ENCODE measurements at regions of chr1 and their contacts with region 1.

Region 1: DNA sequence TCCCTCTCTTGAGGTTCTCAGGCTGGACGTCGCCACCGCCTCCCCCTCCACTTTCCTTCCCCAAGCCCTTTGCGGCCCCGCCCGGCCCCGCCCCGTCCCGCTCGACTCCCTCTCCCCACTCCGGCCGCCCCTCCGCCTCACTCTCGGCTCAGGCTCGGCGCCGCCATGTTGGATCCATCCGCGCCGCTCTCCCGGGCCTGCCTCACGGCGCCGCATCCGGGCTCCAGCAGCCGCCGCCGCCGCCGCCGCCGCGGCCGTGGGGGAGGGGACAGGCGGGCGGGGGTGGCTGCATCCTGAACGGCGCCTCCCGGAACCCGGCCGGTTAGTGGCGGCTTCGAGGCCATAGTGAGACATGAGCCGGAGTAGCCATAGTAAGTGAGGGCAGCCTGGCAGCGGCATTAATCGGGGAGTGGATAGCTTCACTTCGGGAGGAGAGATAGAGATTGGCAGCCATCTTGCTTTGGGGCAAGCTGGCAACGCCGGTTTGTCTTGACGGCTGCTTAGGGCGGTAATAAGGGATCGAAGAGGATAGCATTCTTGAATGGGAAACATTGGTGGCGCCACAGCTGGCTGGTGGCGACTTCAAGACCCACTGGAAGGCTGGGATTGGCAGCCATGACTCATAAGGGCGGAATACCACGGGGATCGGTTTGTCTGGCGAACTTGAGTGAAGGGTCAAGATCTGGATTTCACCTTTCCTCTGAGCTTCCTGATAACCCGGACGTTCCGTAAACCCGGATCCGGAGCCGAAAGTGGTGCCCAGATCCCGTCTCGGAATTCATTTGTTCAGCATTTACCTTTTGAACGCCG is at the start of gene DEDD:
- DNase-seq: peak; percentile 97
- ATAC-seq: peak; percentile 94
- total RNA-seq, gene DEDD: 29.2 TPM

Region 2: DNA sequence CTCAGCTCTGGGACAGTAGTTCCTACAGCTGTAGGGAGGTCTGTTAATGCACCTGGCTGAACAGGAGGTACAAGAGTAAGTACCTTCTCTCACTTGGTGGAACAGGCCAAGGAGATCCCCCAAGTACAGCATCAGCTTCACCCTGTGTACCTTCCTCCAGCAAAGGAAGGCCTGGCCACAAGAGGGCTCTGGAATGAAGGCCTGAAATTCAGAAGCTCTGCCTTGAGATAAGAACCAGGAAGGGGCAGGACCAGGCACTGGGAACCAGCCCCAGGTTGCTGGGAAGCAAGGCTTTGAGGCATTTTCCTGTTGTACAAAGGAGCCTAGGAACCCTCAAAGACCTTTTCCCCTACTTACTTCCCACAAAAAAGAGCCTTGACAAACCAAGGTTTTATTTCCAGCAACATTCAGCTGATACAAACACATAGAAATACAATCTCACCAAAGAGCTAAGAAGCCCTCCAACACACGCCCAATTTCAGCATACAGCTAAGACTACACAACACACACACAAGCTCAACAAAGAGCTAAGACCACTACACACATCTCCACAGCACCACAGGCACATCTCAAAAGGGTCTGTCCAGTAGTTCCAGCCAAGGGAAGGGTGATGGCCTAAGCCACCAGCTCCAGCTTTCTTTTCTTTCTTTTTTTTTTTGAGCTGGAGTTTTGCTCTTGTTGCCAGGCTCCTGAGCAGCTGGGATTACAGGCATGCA is 135.1 kb before region 1 on chr1:
- intact Hi-C with region 1: loop called (anchors 5 kb)
- DNase-seq: no peak
- ATAC-seq: peak; percentile 84

Region 3: GRCh38 chr1:161045750-161046571 is 86.7 kb before region 1 on chr1 and contains the start of gene USF1:
- intact Hi-C with region 1: loop called (anchors 5 kb)
- DNase-seq: peak; percentile 96
- ATAC-seq: peak; percentile 98
- total RNA-seq, gene USF1: 33.7 TPM

Region 4: DNA sequence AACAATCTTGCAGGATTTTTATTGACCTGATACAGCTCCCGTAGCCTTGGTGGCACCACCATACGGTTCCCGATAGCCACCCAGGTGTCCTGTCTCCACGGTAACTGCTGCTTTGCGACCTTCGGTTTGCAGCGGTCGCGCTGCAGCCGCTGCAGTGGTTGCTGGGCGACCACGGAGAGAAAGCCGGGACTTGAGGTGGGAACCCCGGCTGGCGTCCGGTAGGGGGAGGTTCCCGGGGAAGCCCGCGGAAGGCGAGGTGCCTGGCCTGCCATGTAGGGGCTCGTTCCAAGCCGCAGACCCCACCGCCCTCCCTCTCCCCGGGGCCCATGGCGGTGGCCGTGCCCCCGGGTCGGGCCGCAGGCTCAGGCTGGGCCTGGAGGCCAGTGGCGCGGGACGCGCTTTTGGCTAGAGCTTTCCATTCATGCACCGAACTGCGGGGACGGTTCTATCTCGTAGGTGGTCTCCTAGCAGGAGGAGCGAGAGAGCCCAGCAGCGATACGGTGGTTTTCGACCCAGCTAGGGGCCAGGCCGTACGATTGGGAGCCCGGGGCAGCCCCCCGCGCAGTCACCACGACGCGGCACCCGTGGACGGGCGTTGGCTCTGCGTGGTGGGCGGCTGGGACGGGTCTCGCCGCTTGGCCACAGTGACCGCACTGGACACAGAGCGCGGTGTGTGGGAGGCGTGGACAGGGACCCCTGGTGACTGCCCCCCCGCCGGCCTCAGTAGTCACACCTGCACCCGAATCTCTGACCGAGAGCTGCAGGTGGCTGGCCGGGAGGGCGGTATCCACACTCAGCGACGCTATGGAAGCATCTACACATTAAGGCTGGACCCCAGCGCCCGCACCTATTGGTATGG is 34.2 kb before region 1 on chr1 and contains the start of gene KLHDC9:
- intact Hi-C with region 1: loop called (anchors 1 kb)
- DNase-seq: peak; percentile 78
- ATAC-seq: peak; percentile 64
- total RNA-seq, gene KLHDC9: 6.5 TPM

Region 5: DNA sequence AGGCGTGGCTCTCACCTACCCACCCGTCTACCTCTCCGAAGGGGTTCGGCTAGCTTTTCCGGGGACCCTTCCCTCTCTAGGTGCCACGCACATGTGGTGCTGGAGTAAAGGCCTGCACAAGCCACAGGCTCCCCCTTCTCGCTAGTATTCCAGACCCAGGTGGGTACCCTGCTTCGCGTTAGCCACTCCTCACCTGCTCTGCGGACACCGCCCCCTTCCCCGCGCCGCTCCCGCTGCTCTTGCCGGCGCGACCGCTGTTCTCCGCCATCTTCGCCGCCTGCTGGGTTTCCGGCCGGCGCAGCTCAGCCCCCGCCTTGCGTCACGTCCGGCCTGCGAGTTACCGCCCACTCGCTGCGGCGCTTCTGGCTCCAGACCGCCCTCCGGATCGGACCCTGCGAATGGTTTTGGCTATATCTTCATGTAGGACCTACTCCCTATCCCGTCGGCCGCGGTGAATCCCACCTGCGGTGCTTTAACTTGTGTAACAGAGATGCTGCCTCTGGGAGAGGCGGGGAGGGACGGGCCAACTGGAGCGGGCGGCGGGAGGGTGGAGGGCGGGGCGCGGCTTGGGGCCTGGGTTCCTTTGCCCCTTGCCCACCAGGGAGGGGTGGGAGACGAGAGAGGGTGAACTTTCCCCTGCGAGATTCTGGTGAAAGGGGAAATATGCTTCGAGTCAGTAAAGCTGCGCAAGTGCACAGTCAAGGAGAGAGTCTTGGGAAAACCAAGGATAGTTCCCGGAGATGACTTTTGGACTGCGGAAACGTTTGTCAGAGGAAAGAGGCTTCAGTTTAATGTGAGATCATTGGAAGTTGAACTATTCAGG is 14.6 kb before region 1 on chr1 and contains the starts of genes NIT1 and PFDN2:
- intact Hi-C with region 1: loop called (anchors 1 kb)
- DNase-seq: peak; percentile 94
- ATAC-seq: peak; percentile 89
- total RNA-seq, gene NIT1: 36.5 TPM
- total RNA-seq, gene PFDN2: 62.8 TPM

Region 6: GRCh38 chr1:161153679-161154426 is 21.2 kb after region 1 on chr1 and contains the start of gene UFC1:
- intact Hi-C with region 1: loop called (anchors 2 kb)
- DNase-seq: peak; percentile 92
- ATAC-seq: peak; percentile 92
- total RNA-seq, gene UFC1: 82.8 TPM